CD8-positive, alpha-beta T cell (primary cell): ENCODE measurements at regions of chr3 and their contacts with region 1.

Region 1: DNA sequence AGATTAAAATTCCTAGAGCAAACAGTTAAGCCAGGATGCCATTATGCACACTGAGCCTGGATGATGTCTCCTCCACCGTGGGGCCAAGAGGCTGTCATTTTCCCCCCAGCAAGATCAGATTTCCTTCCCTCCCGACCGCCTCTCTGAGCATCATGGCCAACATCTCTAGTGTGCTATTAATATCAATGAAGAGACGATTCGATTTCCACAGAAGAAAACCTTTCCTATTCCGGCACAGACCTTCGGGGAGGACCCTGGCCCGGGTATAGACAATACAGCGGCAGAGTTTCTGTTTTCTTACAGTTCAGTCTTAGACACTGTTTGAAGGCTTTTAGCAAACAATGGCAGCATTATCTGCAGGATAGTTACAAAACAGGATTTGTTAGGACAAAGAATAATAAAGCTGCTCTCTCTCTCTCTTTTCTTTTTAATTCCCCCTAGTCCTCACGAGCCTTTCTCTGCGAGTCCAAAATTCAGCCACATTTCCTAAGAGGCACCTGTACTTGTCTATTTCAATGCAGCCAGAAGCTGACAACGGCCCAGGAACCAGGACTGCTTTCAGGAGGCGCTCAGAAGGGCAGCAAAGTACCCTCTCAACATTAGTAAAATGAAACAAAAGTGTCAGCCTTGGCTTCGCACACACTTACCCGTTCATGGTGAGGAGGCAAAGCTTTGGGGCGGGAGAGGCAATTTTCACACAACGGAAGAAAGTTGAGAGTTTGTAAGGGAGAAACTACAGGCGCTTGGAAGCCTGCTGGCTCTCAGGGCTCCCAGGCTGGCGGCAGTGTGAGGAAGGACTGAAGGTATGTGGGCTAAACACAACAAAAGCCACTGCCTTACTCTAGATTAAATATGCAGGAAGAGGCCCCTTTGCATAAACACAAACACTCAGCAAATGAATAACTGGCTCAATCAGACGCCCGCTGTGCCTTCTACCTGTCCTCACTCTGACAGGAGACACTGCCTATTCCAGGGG is 278.0 kb downstream of the FOXP1 start:
- DNase-seq: peak in 4 of 9 experiments; percentile 19 to 48 (median 33)
- ATAC-seq: peak; percentile 29
- H3K4me3 ChIP-seq: peak overlapping the region; percentile 47 to 56
- H3K4me3 Mint-ChIP-seq: peak overlapping the region; percentile 89
- H3K27ac ChIP-seq: peak overlapping the region; percentile 57 to 80
- H3K27ac Mint-ChIP-seq: peak overlapping the region; percentile 96
- H3K4me1 ChIP-seq: peaks cover 71% of the 10 kb centered on the region
- H3K4me1 Mint-ChIP-seq: peaks cover 85% of the 10 kb centered on the region
- H3K27me3 ChIP-seq: no peaks in the 10 kb centered on the region
- H3K27me3 Mint-ChIP-seq: no peaks in the 10 kb centered on the region
- CTCF ChIP-seq: no peak

Region 2: GRCh38 chr3:70550723-70551319 is 754.7 kb before region 1 on chr3:
- CTCF ChIA-PET with region 1: no interaction called
- POLR2A ChIA-PET with region 1: no interaction called
- intact Hi-C with region 1: loop called in 1 of 2 experiments (anchors 2 kb)
- DNase-seq: peak; percentile 43 to 82 (median 68)
- ATAC-seq: peak; percentile 76
- H3K4me3 ChIP-seq: no peak overlapping the region
- H3K4me3 Mint-ChIP-seq: no peak overlapping the region
- H3K27ac ChIP-seq: no peak overlapping the region
- H3K27ac Mint-ChIP-seq: no peak overlapping the region
- H3K4me1 ChIP-seq: no peaks in the 10 kb centered on the region
- H3K4me1 Mint-ChIP-seq: no peaks in the 10 kb centered on the region
- H3K27me3 ChIP-seq: no peaks in the 10 kb centered on the region
- H3K27me3 Mint-ChIP-seq: peaks cover 2% of the 10 kb centered on the region
- CTCF ChIP-seq: peak; percentile 60

Region 3: DNA sequence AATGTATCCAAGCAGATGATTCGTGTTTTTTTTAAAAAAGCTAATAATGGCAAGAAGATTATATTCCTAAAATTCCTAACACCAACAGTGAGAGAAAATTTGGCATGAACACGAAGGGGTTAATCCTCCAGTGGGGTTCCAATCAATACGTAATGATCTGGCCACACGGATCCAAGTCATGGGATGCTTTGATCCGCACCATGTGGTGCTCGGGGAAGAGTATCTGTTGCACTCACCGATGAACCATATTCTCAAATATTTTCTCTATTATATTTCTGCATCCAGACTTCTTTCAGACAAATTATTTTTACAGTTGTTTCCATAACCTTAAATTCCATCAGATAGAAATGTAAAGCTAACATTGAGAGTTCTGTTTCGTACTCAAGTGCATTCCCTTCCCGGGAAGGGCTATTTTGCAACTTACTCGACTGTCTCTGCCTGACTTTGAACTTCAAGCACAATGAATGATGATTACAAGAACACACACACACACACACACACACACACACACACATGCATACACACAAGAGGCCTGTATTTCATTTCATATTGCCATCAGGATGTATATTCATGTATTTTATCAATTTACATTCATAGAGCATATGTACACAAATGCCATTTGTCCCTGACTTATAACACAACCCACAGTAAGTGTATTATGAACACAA is 289.2 kb before region 1 on chr3:
- CTCF ChIA-PET with region 1: no interaction called
- POLR2A ChIA-PET with region 1: no interaction called
- intact Hi-C with region 1: no loop called
- DNase-seq: no peak
- ATAC-seq: no peak
- H3K4me3 ChIP-seq: no peak overlapping the region
- H3K4me3 Mint-ChIP-seq: no peak overlapping the region
- H3K27ac ChIP-seq: no peak overlapping the region
- H3K27ac Mint-ChIP-seq: peak overlapping the region; percentile 10
- H3K4me1 ChIP-seq: peaks cover 33% of the 10 kb centered on the region
- H3K4me1 Mint-ChIP-seq: peaks cover 71% of the 10 kb centered on the region
- H3K27me3 ChIP-seq: no peaks in the 10 kb centered on the region
- H3K27me3 Mint-ChIP-seq: no peaks in the 10 kb centered on the region
- CTCF ChIP-seq: no peak

Region 4: GRCh38 chr3:71064288-71064955 is 241.1 kb before region 1 on chr3:
- CTCF ChIA-PET with region 1: no interaction called
- POLR2A ChIA-PET with region 1: no interaction called
- intact Hi-C with region 1: loop called in 1 of 2 experiments (anchors 5 kb)
- DNase-seq: peak; percentile 48 to 86 (median 66)
- ATAC-seq: peak; percentile 43
- H3K4me3 ChIP-seq: peak overlapping the region; percentile 65 to 91
- H3K4me3 Mint-ChIP-seq: no peak overlapping the region
- H3K27ac ChIP-seq: peak overlapping the region; percentile 80 to 85
- H3K27ac Mint-ChIP-seq: no peak overlapping the region
- H3K4me1 ChIP-seq: peaks cover 79% of the 10 kb centered on the region
- H3K4me1 Mint-ChIP-seq: peaks cover 67% of the 10 kb centered on the region
- H3K27me3 ChIP-seq: no peaks in the 10 kb centered on the region
- H3K27me3 Mint-ChIP-seq: no peaks in the 10 kb centered on the region
- CTCF ChIP-seq: no peak

Region 5: DNA sequence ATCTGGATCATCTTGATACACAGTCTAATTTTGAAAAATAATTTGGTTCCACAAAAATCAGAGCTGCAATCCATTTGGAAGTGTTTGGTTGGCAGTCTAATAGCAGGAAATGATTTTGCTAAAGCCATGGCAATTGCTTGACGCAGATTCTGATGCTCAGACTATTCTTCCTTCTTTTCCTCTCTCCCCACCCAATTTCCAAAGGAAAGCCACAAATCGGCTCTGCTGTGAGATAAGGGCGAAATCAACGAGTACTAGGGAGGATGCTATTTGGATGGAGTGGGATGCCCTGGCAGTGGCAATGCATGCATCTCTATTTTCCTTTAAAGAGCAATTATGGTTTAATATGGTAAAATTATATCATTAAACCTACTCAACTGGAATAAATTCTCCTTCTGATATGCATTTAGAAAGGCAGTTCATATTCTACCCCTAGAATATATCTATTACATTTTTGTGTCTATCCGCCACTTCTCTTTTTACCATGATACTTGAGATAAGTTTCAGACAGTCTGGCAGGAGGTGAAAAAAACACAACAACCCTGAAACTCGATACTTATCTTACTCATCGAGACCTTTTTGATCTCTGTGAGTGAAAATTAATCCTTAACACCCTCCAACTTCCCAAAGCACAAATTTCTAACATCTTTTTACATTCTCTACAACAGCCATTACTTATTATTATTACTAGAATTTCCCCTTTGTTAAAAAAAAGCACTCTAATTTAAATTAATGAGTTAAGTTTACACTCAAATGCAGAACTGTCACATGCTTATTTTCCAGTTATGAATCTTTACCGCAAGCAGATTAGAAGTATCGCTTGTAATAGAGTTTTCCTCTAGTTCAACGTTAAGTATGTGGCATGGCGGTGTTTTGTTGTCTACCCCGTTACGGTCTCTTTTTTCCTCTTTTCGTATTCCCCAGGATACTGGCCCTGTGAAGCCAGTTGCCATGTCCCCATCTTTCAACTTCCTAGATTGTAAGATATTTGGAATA is 155.3 kb before region 1 on chr3:
- CTCF ChIA-PET with region 1: no interaction called
- POLR2A ChIA-PET with region 1: no interaction called
- intact Hi-C with region 1: no loop called
- DNase-seq: no peak
- ATAC-seq: no peak
- H3K4me3 ChIP-seq: no peak overlapping the region
- H3K4me3 Mint-ChIP-seq: no peak overlapping the region
- H3K27ac ChIP-seq: no peak overlapping the region
- H3K27ac Mint-ChIP-seq: peak overlapping the region; percentile 83
- H3K4me1 ChIP-seq: peaks cover 4% of the 10 kb centered on the region
- H3K4me1 Mint-ChIP-seq: peaks cover 65% of the 10 kb centered on the region
- H3K27me3 ChIP-seq: no peaks in the 10 kb centered on the region
- H3K27me3 Mint-ChIP-seq: no peaks in the 10 kb centered on the region
- CTCF ChIP-seq: no peak

Region 6: DNA sequence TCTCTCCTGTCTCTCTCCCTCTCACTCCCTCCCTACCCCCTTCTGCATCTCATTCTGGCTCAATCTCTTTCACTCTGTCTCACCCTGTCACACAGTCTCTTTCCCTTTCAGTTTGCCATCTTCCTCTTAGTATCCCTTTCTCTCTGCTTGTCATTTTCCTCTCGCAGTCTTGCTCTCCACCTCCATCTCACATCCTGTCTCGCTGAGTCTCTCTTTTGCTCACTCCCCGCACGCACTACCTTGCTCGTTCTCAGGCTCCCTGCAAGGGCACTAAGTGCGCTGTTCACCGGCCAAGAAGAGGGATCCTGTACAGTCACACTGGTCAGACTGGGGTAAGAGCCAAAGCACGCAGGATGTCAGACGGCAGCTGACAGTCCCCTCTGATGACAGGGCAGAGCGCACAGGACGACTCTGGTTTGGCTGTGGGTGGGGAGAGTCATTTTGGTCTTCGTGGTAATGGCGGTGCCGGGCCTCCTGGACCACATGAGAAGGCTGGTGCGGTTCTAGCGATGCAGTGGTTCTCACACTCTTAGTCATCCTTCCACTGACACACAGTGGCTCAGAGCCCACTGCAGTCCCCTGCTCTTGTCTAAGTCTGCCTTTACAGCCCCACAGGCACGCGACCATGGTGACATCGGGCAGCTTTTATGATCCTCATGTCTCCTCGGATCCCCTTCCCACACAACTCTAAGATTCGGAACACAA is 78.8 kb before region 1 on chr3:
- CTCF ChIA-PET with region 1: no interaction called
- POLR2A ChIA-PET with region 1: no interaction called
- intact Hi-C with region 1: loop called (anchors 5 kb)
- DNase-seq: peak; percentile 57 to 88 (median 81)
- ATAC-seq: peak; percentile 75
- H3K4me3 ChIP-seq: peak overlapping the region; percentile 0 to 43
- H3K4me3 Mint-ChIP-seq: peak overlapping the region; percentile 73
- H3K27ac ChIP-seq: peak overlapping the region; percentile 18 to 63
- H3K27ac Mint-ChIP-seq: peak overlapping the region; percentile 97
- H3K4me1 ChIP-seq: peaks cover 56% of the 10 kb centered on the region
- H3K4me1 Mint-ChIP-seq: peaks cover 82% of the 10 kb centered on the region
- H3K27me3 ChIP-seq: no peaks in the 10 kb centered on the region
- H3K27me3 Mint-ChIP-seq: no peaks in the 10 kb centered on the region
- CTCF ChIP-seq: no peak

Region 7: GRCh38 chr3:71389911-71390573 is 84.5 kb after region 1 on chr3:
- CTCF ChIA-PET with region 1: no interaction called
- POLR2A ChIA-PET with region 1: interaction called, 3 read pairs
- intact Hi-C with region 1: loop called in 1 of 2 experiments (anchors 5 kb)
- DNase-seq: peak in 8 of 9 experiments; percentile 12 to 75 (median 34)
- ATAC-seq: peak; percentile 43
- H3K4me3 ChIP-seq: peak overlapping the region; percentile 13 to 30
- H3K4me3 Mint-ChIP-seq: peak overlapping the region; percentile 79
- H3K27ac ChIP-seq: peak overlapping the region; percentile 50 to 63
- H3K27ac Mint-ChIP-seq: peak overlapping the region; percentile 95
- H3K4me1 ChIP-seq: peaks cover 68% of the 10 kb centered on the region
- H3K4me1 Mint-ChIP-seq: peaks cover 77% of the 10 kb centered on the region
- H3K27me3 ChIP-seq: no peaks in the 10 kb centered on the region
- H3K27me3 Mint-ChIP-seq: no peaks in the 10 kb centered on the region
- CTCF ChIP-seq: no peak

Region 8: GRCh38 chr3:71512000-71512399 is 206.5 kb after region 1 on chr3:
- CTCF ChIA-PET with region 1: interaction called, 4 read pairs
- POLR2A ChIA-PET with region 1: no interaction called
- intact Hi-C with region 1: loop called (anchors 5 kb)
- DNase-seq: peak in 7 of 9 experiments; percentile 23 to 86 (median 54)
- ATAC-seq: peak; percentile 98
- H3K4me3 ChIP-seq: no peak overlapping the region
- H3K4me3 Mint-ChIP-seq: no peak overlapping the region
- H3K27ac ChIP-seq: no peak overlapping the region
- H3K27ac Mint-ChIP-seq: peak overlapping the region; percentile 76
- H3K4me1 ChIP-seq: peaks cover 30% of the 10 kb centered on the region
- H3K4me1 Mint-ChIP-seq: peaks cover 23% of the 10 kb centered on the region
- H3K27me3 ChIP-seq: no peaks in the 10 kb centered on the region
- H3K27me3 Mint-ChIP-seq: no peaks in the 10 kb centered on the region
- CTCF ChIP-seq: peak; percentile 67

Region 9: DNA sequence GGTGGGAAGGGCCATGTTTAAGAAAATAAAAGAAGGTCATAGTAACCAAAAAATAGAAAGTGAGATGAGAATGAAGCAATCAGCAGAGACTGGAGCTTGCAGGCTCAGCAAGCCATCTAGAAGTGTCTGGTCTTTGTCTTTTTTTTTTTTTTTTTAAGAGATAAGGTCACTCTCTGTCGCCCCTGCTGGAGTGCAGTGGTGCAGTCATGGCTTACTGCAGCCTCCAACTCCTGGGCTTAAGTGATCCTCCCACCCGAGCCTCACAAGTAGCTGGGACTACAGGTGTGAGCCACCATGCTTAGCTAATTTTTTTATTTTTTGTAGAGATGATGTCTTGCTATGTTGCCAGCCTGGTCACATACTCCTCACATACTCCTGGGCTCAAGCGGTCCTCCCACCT is 1618.5 kb after region 1 on chr3:
- CTCF ChIA-PET with region 1: no interaction called
- POLR2A ChIA-PET with region 1: no interaction called
- intact Hi-C with region 1: no loop called
- DNase-seq: peak in 1 of 9 experiments; percentile 3
- ATAC-seq: no peak
- H3K4me3 ChIP-seq: no peak overlapping the region
- H3K4me3 Mint-ChIP-seq: no peak overlapping the region
- H3K27ac ChIP-seq: no peak overlapping the region
- H3K27ac Mint-ChIP-seq: no peak overlapping the region
- H3K4me1 ChIP-seq: no peaks in the 10 kb centered on the region
- H3K4me1 Mint-ChIP-seq: no peaks in the 10 kb centered on the region
- H3K27me3 ChIP-seq: no peaks in the 10 kb centered on the region
- H3K27me3 Mint-ChIP-seq: peaks cover 5% of the 10 kb centered on the region
- CTCF ChIP-seq: no peak